Psoas muscle (tissue), 8 donors: ENCODE measurements at regions of chr3 and their contacts with region 1.

Region 1: DNA sequence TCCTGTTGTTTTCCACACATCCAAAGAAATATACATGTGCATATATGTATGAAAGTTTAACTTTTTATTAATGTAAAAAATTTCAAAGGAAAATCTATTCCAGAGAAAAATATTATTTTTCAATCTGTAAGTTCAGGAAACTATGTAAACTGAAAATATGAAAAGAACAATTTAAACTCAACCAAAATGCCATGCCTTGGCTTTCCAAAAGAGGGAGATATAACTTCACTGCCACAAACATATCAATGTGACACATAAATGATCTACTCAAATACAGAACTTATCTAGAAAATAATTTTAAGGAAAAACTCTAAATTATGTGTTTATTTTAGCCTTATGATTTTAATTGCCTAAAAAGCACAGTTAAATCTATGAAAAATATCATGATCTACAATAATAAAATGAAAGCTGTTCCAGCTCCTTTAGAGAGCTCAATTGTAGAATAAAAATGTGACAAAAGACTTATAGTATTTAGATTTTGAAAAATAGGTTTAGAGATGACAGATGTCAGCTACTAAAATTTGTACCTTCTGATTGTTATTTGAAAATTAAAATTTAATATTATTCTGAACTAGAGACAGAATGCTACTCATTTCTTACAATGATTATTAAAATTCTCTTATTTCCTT is 94.8 kb downstream of the GBE1 start:
- DNase-seq: no peak
- ATAC-seq: no peak
- H3K4me3 ChIP-seq: no peak overlapping the region
- H3K27ac ChIP-seq: no peak overlapping the region
- H3K4me1 ChIP-seq: peaks cover 9% of the 10 kb centered on the region
- H3K27me3 ChIP-seq: no peaks in the 10 kb centered on the region
- CTCF ChIP-seq: peak; percentile 66

Region 2: DNA sequence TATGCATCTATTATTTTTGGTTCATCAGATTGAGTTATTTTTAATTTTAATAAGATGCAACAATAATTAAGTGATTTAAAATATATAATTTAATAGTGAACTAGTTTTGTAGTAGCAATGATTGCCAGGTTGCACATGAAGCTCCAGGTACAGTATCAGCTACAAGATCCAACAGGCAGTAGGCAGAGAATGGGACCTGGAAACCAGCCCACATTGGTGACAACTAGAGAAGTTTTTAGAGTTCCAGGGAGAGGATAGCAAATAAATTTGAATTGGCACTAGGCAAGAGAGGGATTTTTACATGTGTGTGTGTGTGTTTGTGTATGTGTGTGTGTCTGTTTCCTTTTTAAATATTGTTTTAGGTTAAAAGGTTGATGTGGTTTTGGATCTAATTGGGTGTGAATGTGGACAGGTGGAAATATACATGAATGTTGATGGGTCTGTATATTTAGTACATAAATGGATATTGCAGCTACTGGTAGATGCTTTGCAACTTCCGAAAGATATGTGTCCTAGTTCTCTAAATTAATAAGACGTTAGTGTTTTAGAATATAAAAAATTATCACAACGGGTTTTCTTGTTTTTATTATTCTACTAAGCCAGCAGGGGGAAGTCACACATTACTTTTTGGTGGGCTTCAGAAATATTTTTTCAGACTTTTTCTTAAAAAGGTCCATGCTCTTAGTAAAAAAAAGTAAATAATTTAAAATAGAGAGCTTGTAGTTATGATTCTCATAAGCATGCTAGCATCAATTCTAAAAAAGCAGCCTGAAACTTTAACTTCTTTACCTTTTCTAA is 204.9 kb after region 1 on chr3:
- intact Hi-C with region 1: loop called in 1 of 2 experiments (anchors 10 kb)
- DNase-seq: no peak
- ATAC-seq: no peak
- H3K4me3 ChIP-seq: no peak overlapping the region
- H3K27ac ChIP-seq: no peak overlapping the region
- H3K4me1 ChIP-seq: peaks cover 4% of the 10 kb centered on the region
- H3K27me3 ChIP-seq: no peaks in the 10 kb centered on the region
- CTCF ChIP-seq: peak; percentile 37

Region 3: GRCh38 chr3:82685761-82686160 is 1019.2 kb after region 1 on chr3:
- intact Hi-C with region 1: no loop called
- DNase-seq: no peak
- ATAC-seq: no peak
- H3K4me3 ChIP-seq: no peak overlapping the region
- H3K27ac ChIP-seq: no peak overlapping the region
- H3K4me1 ChIP-seq: no peaks in the 10 kb centered on the region
- H3K27me3 ChIP-seq: no peaks in the 10 kb centered on the region
- CTCF ChIP-seq: no peak